PC-9 (cell line): ENCODE measurements at regions of chr12 and their contacts with region 1.

Region 1: DNA sequence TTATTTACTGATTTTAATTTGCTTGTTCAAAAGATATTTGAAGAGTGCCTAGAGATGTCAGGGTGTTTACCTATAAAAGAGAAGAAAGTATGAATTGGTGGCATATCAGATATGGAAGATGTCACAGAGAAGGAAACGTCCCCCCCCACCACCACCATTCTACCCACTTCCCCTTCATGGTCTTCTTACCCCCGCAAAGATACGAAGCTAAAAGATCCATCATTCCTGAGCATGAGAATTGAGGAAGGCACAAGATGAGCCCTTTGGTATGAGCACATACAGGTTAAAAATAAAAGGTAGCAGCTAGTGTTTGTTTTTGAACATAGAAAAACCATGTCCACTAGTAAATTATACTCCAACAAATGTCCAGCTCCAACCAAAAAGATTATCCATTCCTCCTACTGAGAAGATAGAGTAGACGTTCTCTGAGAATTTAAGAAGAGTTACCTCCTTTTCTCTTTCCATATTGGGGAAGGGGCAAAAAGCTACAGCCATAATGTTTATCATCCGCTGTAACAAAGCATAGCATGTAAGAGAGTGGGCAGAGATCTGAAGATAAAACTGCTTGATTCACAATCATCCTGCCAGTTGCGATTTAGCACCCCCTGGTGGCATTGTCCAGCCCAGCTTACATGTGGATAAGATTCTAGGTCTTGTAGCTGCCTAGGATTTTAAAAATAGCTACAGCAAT is 29.1 kb downstream of the NFYB start:
- DNase-seq: peak; percentile 63 to 75
- H3K4me3 ChIP-seq: no peak overlapping the region
- H3K27ac ChIP-seq: no peak overlapping the region
- H3K4me1 ChIP-seq: no peaks in the 10 kb centered on the region
- H3K27me3 ChIP-seq: no peaks in the 10 kb centered on the region
- CTCF ChIP-seq: peak; percentile 88

Region 2: DNA sequence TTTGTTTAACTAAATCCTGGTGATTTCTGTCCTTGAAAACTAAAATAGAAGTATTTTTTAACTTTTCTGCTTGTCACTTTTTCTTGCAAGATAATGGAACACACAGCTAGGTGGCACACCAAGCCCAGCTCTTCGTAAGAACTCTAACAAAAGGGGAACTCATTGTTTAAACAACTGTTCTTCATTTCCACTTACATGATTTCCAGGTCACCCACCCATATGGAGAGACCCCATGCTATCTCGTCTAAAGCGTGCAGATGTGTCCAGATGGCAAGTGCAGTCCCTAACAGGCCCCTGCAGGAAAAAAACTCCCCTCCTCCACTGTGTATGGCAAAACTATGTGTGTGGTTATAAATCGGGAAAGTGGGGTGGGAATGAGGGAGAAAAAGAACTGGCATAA is 224.6 kb before region 1 on chr12:
- CTCF ChIA-PET with region 1: interaction called, 3 read pairs
- POLR2A ChIA-PET with region 1: no interaction called
- intact Hi-C with region 1: loop called (anchors 1 kb)
- DNase-seq: no peak
- H3K4me3 ChIP-seq: no peak overlapping the region
- H3K27ac ChIP-seq: no peak overlapping the region
- H3K4me1 ChIP-seq: peaks cover 7% of the 10 kb centered on the region; the same call in 1 of the 2 replicates
- H3K27me3 ChIP-seq: no peaks in the 10 kb centered on the region
- CTCF ChIP-seq: peak; percentile 62

Region 3: DNA sequence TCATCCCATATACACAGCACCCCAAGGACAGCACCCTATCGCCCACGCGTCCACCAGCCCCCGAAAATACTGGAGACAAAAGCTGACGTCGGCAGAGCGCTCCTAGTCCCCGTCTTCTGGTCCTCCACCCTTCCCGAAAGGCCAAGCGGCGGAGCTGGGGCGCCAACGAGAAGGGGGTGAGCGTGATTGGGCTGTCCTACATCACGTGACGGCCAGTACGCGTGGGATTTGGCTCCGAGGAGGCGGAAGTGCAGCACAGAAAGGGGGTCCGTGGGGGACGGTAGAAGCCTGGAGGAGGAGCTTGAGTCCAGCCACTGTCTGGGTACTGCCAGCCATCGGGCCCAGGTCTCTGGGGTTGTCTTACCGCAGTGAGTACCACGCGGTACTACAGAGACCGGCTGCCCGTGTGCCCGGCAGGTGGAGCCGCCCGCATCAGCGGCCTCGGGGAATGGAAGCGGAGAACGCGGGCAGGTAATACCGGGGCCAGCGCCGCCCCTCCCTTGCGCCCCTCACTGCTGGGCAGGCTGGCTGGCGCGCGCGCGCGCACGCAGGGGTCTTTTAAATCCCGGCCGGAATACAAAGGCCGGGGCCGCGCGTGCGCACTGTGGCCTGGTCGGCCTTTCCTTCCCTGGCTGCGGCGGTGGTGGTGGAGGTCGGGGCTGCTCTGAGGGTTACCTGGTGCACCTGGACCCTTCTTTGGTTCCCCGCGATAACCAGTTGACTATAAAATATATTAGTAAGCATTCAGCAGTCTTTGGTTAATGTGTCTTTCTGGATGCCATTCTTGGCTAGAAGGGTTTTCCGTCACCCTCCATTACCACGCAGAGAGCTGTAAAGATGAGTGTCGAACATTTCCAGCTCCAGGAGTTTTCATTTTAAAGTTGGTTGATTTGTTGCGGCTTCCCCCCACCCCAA is 143.1 kb before region 1 on chr12 and contains the start of gene TDG:
- CTCF ChIA-PET with region 1: no interaction called
- POLR2A ChIA-PET with region 1: no interaction called
- intact Hi-C with region 1: loop called (anchors 5 kb)
- DNase-seq: peak; percentile 95
- H3K4me3 ChIP-seq: peak within 1 kb of the TSS; percentile 89
- H3K27ac ChIP-seq: peak within 1 kb of the TSS; percentile 80
- H3K4me1 ChIP-seq: peaks cover 40% of the 10 kb centered on the region
- H3K27me3 ChIP-seq: no peaks in the 10 kb centered on the region
- CTCF ChIP-seq: no peak; the same call in 1 of the 2 replicates
- total RNA-seq, gene TDG: 17.9 and 21.0 TPM in 2 replicates

Region 4: DNA sequence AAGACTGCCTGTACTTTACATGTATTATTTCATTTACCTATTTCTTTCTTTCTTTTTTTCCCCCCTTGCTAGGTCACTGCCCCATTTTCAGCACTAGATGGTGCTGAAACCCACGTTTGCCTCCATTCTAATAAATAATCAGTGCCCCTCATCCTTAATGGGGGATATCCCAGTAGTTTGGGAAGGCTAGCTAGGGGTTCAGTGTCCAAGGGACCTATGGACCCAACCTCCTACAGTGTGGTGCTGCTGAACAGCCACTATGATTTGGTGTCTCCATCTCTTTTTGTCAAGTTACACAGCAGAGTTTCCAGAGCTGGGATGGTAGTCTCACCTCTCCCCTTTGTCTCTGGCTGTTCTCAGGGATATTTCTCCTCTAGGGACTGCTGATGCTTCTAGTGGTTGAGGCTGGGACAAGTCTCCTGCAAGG is 51.1 kb before region 1 on chr12:
- CTCF ChIA-PET with region 1: no interaction called
- POLR2A ChIA-PET with region 1: no interaction called
- intact Hi-C with region 1: loop called (anchors 2 kb)
- DNase-seq: peak in 1 of 2 experiments; percentile 32
- H3K4me3 ChIP-seq: no peak overlapping the region
- H3K27ac ChIP-seq: no peak overlapping the region
- H3K4me1 ChIP-seq: peaks cover 15% of the 10 kb centered on the region; the same call in 1 of the 2 replicates
- H3K27me3 ChIP-seq: no peaks in the 10 kb centered on the region
- CTCF ChIP-seq: peak; percentile 82

Region 5: DNA sequence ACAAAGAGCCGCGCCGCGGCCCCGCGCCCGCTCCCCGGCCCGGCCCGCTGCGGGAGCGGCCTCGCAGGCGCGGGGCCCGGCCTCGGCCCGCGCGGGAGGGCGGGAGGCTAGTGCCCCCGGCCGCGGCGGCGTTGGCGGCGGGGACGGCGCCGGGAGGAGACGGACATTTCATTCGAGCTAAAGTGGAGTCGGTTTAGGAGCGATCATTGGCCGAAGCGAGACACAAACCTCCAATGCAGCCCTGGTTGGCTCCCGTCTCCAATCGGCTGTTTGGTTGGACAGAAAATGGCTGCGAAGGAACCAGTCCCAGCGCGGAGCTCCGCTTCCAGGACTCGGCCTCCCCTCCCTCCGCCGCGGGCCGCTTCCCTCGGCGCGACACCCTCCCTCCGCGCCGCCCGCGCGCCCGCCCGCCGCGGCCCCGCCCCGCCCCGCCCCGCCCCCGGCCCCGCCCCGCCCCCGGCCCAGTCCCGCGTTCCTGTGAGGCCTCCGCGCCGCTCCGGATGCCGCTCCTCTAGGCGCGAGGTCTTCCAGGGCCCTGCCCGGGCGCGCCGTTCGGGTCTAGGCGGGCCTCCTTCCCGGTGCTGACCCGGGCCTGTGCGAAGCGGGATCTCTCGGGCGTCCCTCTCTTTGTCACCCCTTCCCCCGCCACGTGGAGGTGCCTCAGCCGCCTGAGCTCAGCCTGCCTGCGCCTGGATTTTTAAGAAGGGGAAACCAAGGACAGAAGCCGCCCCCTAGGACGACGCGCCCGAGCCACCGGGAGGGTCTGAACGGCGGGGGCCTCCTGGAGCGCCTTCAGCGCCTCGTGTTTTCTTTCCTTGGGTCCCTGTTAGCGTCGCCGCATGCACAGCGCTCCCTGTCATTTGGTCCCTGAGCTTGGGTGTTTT is 29.3 kb after region 1 on chr12 and contains the start of gene NFYB:
- CTCF ChIA-PET with region 1: no interaction called
- POLR2A ChIA-PET with region 1: no interaction called
- intact Hi-C with region 1: no loop called
- DNase-seq: peak; percentile 92 to 93
- H3K4me3 ChIP-seq: peak within 1 kb of the TSS; percentile 78
- H3K27ac ChIP-seq: peak within 1 kb of the TSS; percentile 15; the same call in 1 of the 2 replicates
- H3K4me1 ChIP-seq: peaks cover 26% of the 10 kb centered on the region
- H3K27me3 ChIP-seq: no peaks in the 10 kb centered on the region
- CTCF ChIP-seq: no peak
- total RNA-seq, gene NFYB: 30.6 and 36.7 TPM in 2 replicates